Sigmoid colon (tissue), 7 donors: ENCODE measurements at regions of chr9 and their contacts with region 1.

Region 1: GRCh38 chr9:91837981-91838731 is 111.9 kb downstream of the ROR2 start:
- DNase-seq: peak; percentile 85
- H3K4me3 ChIP-seq: peak overlapping the region; percentile 11 to 40 (median 23)
- H3K27ac ChIP-seq: peak overlapping the region; percentile 74 to 86 (median 80)
- H3K4me1 ChIP-seq: peaks cover 0 to 99% (median 96%) of the 10 kb centered on the region in 4 donors
- H3K27me3 ChIP-seq: no peaks in the 10 kb centered on the region
- CTCF ChIP-seq: no peak
- EP300 ChIP-seq: no peak
- POLR2A ChIP-seq: no peak

Region 2: DNA sequence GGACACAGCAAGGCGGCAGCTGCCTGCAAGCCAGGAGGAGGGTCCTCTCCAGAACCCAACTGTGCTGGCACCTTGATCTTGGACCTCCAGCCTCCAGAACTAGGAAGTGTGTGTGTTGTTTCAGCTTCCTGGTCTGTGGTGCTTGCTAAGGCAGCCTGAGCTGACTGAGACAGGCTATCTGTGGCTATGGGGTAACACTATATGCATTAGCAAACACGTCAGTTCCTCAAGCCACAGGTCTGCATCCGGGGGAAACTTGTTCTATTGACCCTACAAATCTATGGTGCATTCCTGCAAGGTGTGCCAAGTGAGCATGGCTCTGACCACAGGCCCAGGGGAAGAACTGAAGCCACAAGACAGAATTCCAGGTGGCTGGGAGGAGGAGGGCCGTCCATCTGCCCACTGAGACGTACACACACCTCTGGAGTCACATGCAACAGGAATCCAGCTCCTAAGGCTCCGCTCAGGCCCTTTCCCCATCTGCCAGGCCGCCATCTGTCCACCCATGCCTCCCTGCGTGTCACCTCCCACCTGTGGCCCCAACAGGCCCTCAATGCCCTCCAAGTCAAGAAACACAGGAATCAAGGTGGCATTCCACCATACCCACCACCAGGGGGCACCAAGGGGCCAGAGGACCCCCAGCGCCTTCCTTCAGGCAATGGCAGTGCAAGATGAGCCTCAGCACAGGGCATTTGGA is 63.0 kb before region 1 on chr9:
- intact Hi-C with region 1: loop called (anchors 5 kb)
- DNase-seq: peak; percentile 87
- H3K4me3 ChIP-seq: no peak overlapping the region
- H3K27ac ChIP-seq: peak overlapping the region in 3 of 4 donors; percentile 74 to 80 (median 79)
- H3K4me1 ChIP-seq: peaks cover 0 to 77% (median 70%) of the 10 kb centered on the region in 4 donors
- H3K27me3 ChIP-seq: no peaks in the 10 kb centered on the region
- CTCF ChIP-seq: peak; percentile 70 to 83 (median 76)
- EP300 ChIP-seq: no peak
- POLR2A ChIP-seq: no peak

Region 3: GRCh38 chr9:91930475-91930874 is 92.3 kb after region 1 on chr9:
- intact Hi-C with region 1: no loop called
- DNase-seq: no peak
- H3K4me3 ChIP-seq: no peak overlapping the region
- H3K27ac ChIP-seq: no peak overlapping the region
- H3K4me1 ChIP-seq: peaks cover 0 to 34% (median 29%) of the 10 kb centered on the region in 4 donors
- H3K27me3 ChIP-seq: no peaks in the 10 kb centered on the region
- CTCF ChIP-seq: no peak
- EP300 ChIP-seq: no peak
- POLR2A ChIP-seq: no peak